ENCODE measurements at regions of chr1 and their contacts with region 1.

Region 1: GRCh38 chr1:43974443-43975248 is at the start of gene ATP6V0B:
- DNase-seq: peak; percentile 86 to 95 (median 89)
- ATAC-seq: peak; percentile 71 to 80
- H3K4me3 Mint-ChIP-seq: peak within 1 kb of the TSS; percentile 84 to 97 (median 94)
- H3K27ac Mint-ChIP-seq: peak within 1 kb of the TSS; percentile 89 to 98 (median 96)
- H3K4me1 Mint-ChIP-seq: peaks cover 35 to 65% (median 63%) of the 10 kb centered on the region in 4 donors
- H3K27me3 Mint-ChIP-seq: peaks cover 0 to 5% (median 0%) of the 10 kb centered on the region in 5 donors
- polyA plus RNA-seq, gene ATP6V0B: 149 to 213 (median 166) TPM

Region 2: DNA sequence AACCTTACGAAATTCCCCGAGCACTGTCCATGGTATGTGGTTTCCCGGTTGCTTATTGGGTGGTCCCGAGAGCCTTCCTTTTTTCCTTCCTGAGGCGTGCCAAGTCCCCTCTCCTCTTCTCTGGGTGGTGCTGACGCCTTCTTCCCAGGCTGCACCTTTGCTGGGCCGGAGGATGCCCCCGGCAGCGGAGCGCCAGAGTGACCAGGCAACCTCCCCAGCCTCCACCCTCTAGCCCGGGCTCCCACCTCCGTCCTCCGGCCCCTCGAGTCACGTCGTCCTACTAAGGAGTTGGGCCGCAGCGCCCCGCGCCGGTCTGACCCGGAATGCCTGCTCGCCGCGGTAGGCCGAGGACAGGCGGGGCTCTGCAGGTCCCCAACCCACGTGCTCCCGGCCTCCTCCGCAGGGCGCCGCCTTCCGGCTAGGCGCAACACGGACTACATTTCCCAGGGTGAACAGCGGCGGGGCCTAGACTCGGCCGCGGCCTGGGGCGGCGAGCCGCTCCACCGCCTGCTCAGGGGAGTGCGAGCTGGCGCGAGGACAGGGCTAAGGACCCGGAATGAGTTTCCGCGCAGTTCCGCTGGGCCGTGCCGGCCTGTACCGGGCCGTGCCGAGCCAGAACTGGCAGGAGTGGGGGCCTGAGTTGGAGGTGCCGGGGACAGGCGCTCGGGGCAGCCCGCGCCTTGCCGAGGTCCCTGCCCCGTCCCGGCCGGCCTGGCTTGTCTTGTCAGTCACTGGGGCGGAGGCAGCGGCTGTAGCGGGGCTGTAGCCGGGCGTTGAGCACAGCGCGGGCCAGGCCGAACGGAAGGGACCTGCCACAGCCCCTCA is 28.2 kb before region 1 on chr1 and contains the start of gene IPO13:
- POLR2A ChIA-PET with region 1: interaction called, 13 read pairs
- DNase-seq: peak; percentile 90 to 99 (median 94)
- ATAC-seq: peak; percentile 95 to 97
- H3K4me3 Mint-ChIP-seq: peak within 1 kb of the TSS; percentile 88 to 98 (median 92)
- H3K27ac Mint-ChIP-seq: peak within 1 kb of the TSS; percentile 90 to 97 (median 96)
- H3K4me1 Mint-ChIP-seq: peaks cover 37 to 63% (median 58%) of the 10 kb centered on the region in 4 donors
- H3K27me3 Mint-ChIP-seq: no peaks in the 10 kb centered on the region
- polyA plus RNA-seq, gene IPO13: 13.8 to 14.5 (median 14.4) TPM

Region 3: GRCh38 chr1:43990271-43991199 is 15.9 kb after region 1 on chr1:
- POLR2A ChIA-PET with region 1: interaction called, 12 read pairs
- DNase-seq: no peak
- ATAC-seq: peak in 1 of 2 donors; percentile 3
- H3K4me3 Mint-ChIP-seq: peak overlapping the region; percentile 87 to 96 (median 94)
- H3K27ac Mint-ChIP-seq: peak overlapping the region in 6 of 10 donors; percentile 24 to 90 (median 86)
- H3K4me1 Mint-ChIP-seq: peaks cover 15 to 20% (median 18%) of the 10 kb centered on the region in 4 donors
- H3K27me3 Mint-ChIP-seq: no peaks in the 10 kb centered on the region

Region 4: DNA sequence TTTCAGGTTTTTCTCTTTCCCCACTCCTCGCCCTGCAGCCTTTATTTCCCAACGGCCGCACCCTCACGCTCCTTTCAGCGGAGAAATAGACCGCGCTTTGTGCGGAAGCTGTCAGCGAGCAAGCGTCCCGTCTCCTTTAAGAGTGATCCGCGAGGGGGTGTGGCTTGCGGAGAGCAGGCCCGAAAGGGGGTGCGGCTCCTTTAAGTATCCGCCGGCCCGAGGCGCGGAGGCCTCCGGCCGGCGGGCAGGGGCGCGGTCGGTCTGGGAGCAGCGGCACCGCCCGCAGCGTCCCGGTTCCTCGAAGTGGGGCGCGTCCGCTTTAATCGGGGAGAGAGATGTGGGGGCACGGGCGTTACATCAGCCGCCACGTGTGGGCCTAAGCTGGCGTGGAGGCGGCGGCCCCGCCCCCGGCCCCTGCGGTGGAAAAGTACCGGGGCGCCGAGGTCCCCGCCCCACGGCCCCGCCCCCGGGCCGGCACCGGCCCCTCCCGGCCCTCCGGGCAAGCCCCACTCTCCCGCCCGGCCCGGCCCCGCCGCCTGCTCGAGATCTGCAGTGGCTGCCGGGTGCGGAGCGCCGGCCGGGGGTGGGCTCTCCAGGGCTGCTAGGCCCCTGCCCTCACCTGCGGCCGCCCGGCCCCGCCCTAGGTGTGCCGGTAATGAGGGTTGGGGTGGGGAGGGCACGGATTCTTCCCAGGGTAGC is 55.4 kb after region 1 on chr1:
- POLR2A ChIA-PET with region 1: interaction called, 11 read pairs
- DNase-seq: peak; percentile 69 to 91 (median 78)
- ATAC-seq: peak; percentile 79 to 80
- H3K4me3 Mint-ChIP-seq: peak overlapping the region; percentile 88 to 99 (median 96)
- H3K27ac Mint-ChIP-seq: peak overlapping the region; percentile 87 to 98 (median 96)
- H3K4me1 Mint-ChIP-seq: peaks cover 16 to 25% (median 18%) of the 10 kb centered on the region in 4 donors
- H3K27me3 Mint-ChIP-seq: no peaks in the 10 kb centered on the region